CD8-positive, alpha-beta T cell (primary cell): ENCODE measurements at regions of chr6 and their contacts with region 1.

Region 1: DNA sequence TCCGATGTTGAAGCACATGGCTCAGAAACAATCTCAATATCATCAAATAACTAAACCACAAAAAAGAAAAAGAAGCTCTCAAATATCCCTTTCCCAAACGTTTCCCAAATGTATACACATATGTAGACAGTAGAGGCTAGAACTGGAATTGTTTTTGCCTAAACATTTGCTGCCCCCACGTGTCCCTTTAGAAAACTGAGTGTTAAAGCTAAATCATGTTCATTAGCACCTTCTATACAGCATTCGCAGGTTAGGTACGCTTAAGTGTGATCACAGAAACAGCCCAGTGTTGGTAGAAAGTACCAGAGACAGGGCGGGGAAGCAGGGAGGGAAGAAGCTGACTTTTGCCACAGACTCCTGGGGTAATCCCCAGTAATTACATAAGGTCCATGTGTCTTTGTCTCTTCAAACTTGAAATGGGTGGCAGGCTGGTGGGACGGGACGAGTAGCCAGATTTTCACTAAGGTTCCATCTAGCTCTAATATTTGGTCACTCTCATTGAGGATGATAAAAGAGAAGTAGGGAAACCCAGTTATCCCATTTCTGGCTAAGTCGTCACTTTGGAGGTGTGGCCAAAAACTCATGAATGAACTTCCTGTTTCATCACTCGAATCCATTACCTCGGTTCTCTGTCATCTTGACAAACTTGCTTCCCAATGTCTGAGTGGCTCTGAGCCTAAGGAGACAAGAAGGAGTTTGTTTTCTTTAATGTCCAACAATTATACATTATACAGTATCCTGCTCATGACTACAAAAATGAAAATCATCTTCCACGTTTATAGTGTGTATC is 15.0 kb upstream of the TFAP2A start:
- DNase-seq: peak in 2 of 9 experiments; percentile 29 to 35
- ATAC-seq: peak; percentile 34
- H3K4me3 ChIP-seq: no peak overlapping the region
- H3K4me3 Mint-ChIP-seq: no peak overlapping the region
- H3K27ac ChIP-seq: no peak overlapping the region
- H3K27ac Mint-ChIP-seq: no peak overlapping the region
- H3K4me1 ChIP-seq: peaks cover 13% of the 10 kb centered on the region
- H3K4me1 Mint-ChIP-seq: peaks cover 10% of the 10 kb centered on the region
- H3K27me3 ChIP-seq: peaks cover 4 to 24% of the 10 kb centered on the region in 2 experiments
- H3K27me3 Mint-ChIP-seq: peaks cover 54% of the 10 kb centered on the region
- CTCF ChIP-seq: no peak

Region 2: DNA sequence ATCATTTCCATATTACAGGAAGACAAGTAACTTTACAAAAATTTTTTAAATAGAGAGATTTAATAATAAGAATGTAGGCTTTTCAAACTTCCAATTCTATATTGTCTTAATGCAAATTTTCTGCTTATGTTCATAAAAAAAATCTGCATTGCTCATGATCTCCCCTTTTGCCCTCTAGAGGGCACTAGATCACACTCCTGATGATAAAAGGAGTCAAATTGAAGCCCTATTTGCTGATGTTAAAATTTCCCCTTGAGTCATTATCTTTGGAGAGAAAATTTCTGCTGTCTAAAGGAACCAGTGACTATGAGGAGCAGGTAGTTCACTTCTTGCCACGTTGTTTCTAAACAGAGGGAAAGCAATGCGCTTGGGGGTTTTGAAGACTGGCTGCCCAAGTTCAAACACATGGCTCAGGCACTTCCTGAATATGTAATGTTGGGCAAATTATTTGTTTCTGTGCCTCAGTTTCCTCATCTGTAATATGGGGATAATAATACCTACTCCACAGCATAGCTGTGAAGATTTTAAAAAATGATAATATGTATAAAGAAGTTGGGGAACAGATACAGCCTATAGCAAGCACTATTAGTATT is 889.2 kb before region 1 on chr6:
- CTCF ChIA-PET with region 1: no interaction called
- POLR2A ChIA-PET with region 1: no interaction called
- intact Hi-C with region 1: loop called in 1 of 2 experiments (anchors 10 kb)
- DNase-seq: peak in 1 of 9 experiments; percentile 15
- ATAC-seq: no peak
- H3K4me3 ChIP-seq: no peak overlapping the region
- H3K4me3 Mint-ChIP-seq: no peak overlapping the region
- H3K27ac ChIP-seq: no peak overlapping the region
- H3K27ac Mint-ChIP-seq: no peak overlapping the region
- H3K4me1 ChIP-seq: no peaks in the 10 kb centered on the region
- H3K4me1 Mint-ChIP-seq: no peaks in the 10 kb centered on the region
- H3K27me3 ChIP-seq: no peaks in the 10 kb centered on the region
- H3K27me3 Mint-ChIP-seq: no peaks in the 10 kb centered on the region
- CTCF ChIP-seq: no peak

Region 3: GRCh38 chr6:10030942-10031537 is 398.8 kb before region 1 on chr6:
- CTCF ChIA-PET with region 1: no interaction called
- POLR2A ChIA-PET with region 1: no interaction called
- intact Hi-C with region 1: loop called in 1 of 2 experiments (anchors 5 kb)
- DNase-seq: no peak
- ATAC-seq: no peak
- H3K4me3 ChIP-seq: no peak overlapping the region
- H3K4me3 Mint-ChIP-seq: no peak overlapping the region
- H3K27ac ChIP-seq: no peak overlapping the region
- H3K27ac Mint-ChIP-seq: no peak overlapping the region
- H3K4me1 ChIP-seq: no peaks in the 10 kb centered on the region
- H3K4me1 Mint-ChIP-seq: no peaks in the 10 kb centered on the region
- H3K27me3 ChIP-seq: no peaks in the 10 kb centered on the region
- H3K27me3 Mint-ChIP-seq: no peaks in the 10 kb centered on the region
- CTCF ChIP-seq: no peak

Region 4: GRCh38 chr6:10256113-10256690 is 173.6 kb before region 1 on chr6:
- CTCF ChIA-PET with region 1: no interaction called
- POLR2A ChIA-PET with region 1: no interaction called
- intact Hi-C with region 1: loop called in 1 of 2 experiments (anchors 10 kb)
- DNase-seq: no peak
- ATAC-seq: no peak
- H3K4me3 ChIP-seq: no peak overlapping the region
- H3K4me3 Mint-ChIP-seq: no peak overlapping the region
- H3K27ac ChIP-seq: no peak overlapping the region
- H3K27ac Mint-ChIP-seq: no peak overlapping the region
- H3K4me1 ChIP-seq: no peaks in the 10 kb centered on the region
- H3K4me1 Mint-ChIP-seq: no peaks in the 10 kb centered on the region
- H3K27me3 ChIP-seq: no peaks in the 10 kb centered on the region
- H3K27me3 Mint-ChIP-seq: peaks cover 3% of the 10 kb centered on the region
- CTCF ChIP-seq: no peak

Region 5: GRCh38 chr6:10332121-10332520 is 97.7 kb before region 1 on chr6:
- CTCF ChIA-PET with region 1: no interaction called
- POLR2A ChIA-PET with region 1: no interaction called
- intact Hi-C with region 1: no loop called
- DNase-seq: no peak
- ATAC-seq: no peak
- H3K4me3 ChIP-seq: no peak overlapping the region
- H3K4me3 Mint-ChIP-seq: no peak overlapping the region
- H3K27ac ChIP-seq: no peak overlapping the region
- H3K27ac Mint-ChIP-seq: no peak overlapping the region
- H3K4me1 ChIP-seq: no peaks in the 10 kb centered on the region
- H3K4me1 Mint-ChIP-seq: no peaks in the 10 kb centered on the region
- H3K27me3 ChIP-seq: no peaks in the 10 kb centered on the region
- H3K27me3 Mint-ChIP-seq: peaks cover 6% of the 10 kb centered on the region
- CTCF ChIP-seq: no peak

Region 6: DNA sequence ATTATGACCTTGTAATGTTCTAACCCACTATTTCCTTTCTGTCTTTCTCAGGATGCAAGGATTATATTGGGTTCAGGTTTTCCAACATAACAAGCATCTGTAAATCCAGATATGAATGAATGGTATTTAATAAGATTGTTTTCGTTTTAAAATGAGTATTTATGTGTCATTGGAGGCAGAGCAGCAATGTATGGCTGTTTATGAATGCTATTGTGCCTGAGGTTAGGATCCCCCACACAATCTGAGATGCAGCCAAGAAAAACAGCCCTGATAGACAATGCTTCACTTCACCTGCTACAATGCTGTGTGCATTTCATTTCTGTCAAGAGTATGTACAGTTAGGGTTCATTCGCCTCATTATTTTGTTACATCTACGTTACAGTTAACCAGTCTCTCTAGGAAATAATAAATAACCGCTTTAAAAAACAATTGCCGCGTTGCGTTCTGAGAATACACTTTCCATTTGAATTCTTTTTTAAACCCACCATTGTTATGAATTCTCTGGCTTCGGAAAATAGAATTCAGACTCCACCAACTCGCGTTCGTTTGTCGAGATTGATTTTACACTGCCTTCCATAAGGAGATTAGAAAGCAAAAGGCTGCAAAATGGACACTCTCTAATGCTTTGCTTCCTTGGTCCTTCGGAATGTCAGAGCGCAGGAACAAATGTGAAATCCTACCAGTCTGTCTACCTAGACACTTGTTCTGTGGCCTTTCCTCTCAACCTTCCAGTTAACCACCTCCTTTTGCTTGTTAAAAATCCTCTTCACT is 34.5 kb before region 1 on chr6:
- CTCF ChIA-PET with region 1: no interaction called
- POLR2A ChIA-PET with region 1: no interaction called
- intact Hi-C with region 1: no loop called
- DNase-seq: no peak
- ATAC-seq: no peak
- H3K4me3 ChIP-seq: no peak overlapping the region
- H3K4me3 Mint-ChIP-seq: no peak overlapping the region
- H3K27ac ChIP-seq: no peak overlapping the region
- H3K27ac Mint-ChIP-seq: no peak overlapping the region
- H3K4me1 ChIP-seq: no peaks in the 10 kb centered on the region
- H3K4me1 Mint-ChIP-seq: peaks cover 2% of the 10 kb centered on the region
- H3K27me3 ChIP-seq: peaks cover 31 to 34% of the 10 kb centered on the region in 2 experiments
- H3K27me3 Mint-ChIP-seq: peaks cover 86% of the 10 kb centered on the region
- CTCF ChIP-seq: no peak